CD8-positive, alpha-beta memory T cell (primary cell): ENCODE measurements at regions of chr6 and their contacts with region 1.

Region 1: GRCh38 chr6:31971993-31972708 is at the start of gene DXO:
- DNase-seq: peak; percentile 97 to 100 (median 98)
- H3K4me3 ChIP-seq: peak within 1 kb of the TSS; percentile 93
- H3K4me3 Mint-ChIP-seq: peak within 1 kb of the TSS; percentile 97 to 99 (median 98)
- H3K27ac ChIP-seq: peak within 1 kb of the TSS; percentile 100
- H3K27ac Mint-ChIP-seq: peak within 1 kb of the TSS; percentile 100
- H3K4me1 ChIP-seq: peaks cover 30% of the 10 kb centered on the region
- H3K4me1 Mint-ChIP-seq: peaks cover 34 to 49% (median 43%) of the 10 kb centered on the region in 3 donors
- H3K27me3 ChIP-seq: no peaks in the 10 kb centered on the region
- H3K27me3 Mint-ChIP-seq: peaks cover 0 to 10% of the 10 kb centered on the region in 2 donors
- total RNA-seq, gene DXO: 13.8 to 15.8 TPM

Region 2: GRCh38 chr6:31958741-31959739 is 13.1 kb before region 1 on chr6 and contains the starts of genes NELFE and SKIC2:
- CTCF ChIA-PET with region 1: interaction called, 8 read pairs
- POLR2A ChIA-PET with region 1: interaction called, 71 read pairs
- DNase-seq: peak; percentile 98 to 99 (median 98)
- H3K4me3 ChIP-seq: peak within 1 kb of the TSS; percentile 100
- H3K4me3 Mint-ChIP-seq: peak within 1 kb of the TSS; percentile 88 to 98 (median 95)
- H3K27ac ChIP-seq: peak within 1 kb of the TSS; percentile 99
- H3K27ac Mint-ChIP-seq: peak within 1 kb of the TSS; percentile 96 to 99 (median 98)
- H3K4me1 ChIP-seq: peaks cover 27% of the 10 kb centered on the region
- H3K4me1 Mint-ChIP-seq: peaks cover 34 to 47% (median 40%) of the 10 kb centered on the region in 3 donors
- H3K27me3 ChIP-seq: no peaks in the 10 kb centered on the region
- H3K27me3 Mint-ChIP-seq: peaks cover 0 to 1% of the 10 kb centered on the region in 2 donors
- total RNA-seq, gene NELFE: 86.1 to 90.6 TPM
- total RNA-seq, gene SKIC2: 110 to 114 TPM